ENCODE measurements at regions of chrX and their contacts with region 1.

Region 1: GRCh38 chrX:153075366-153075765 is 3.1 kb downstream of the PNMA6A start:
- DNase-seq: peak in 1 of 2 donors; percentile 81
- H3K4me3 ChIP-seq: no peak overlapping the region
- CTCF ChIP-seq: no peak
- POLR2A ChIP-seq: no peak

Region 2: DNA sequence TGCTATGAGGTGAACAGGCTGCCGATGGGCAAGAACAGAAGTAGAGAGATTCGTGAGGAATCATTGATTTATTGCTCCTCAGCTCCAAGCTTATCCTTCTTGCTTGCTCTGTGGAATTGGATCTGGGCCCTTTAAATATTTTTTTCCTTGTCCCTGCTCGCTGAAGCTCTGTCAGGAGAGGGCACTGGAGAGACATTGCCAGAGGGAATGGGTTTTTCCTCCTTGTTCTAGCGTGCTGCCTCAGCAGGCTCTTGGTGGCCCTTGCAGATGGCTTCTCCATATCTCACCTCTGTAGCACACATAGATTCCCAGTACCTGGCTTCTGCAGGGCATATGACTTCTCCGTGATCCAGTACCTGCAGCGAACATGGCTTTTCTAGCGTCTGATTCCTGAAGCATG is 1273.4 kb before region 1 on chrX:
- intact Hi-C with region 1: loop called (anchors 10 kb)
- DNase-seq: no peak
- H3K4me3 ChIP-seq: no peak overlapping the region
- CTCF ChIP-seq: no peak
- POLR2A ChIP-seq: no peak

Region 3: GRCh38 chrX:153153516-153153915 is 78.2 kb after region 1 on chrX:
- intact Hi-C with region 1: no loop called
- DNase-seq: no peak
- H3K4me3 ChIP-seq: no peak overlapping the region
- CTCF ChIP-seq: no peak
- POLR2A ChIP-seq: no peak

Region 4: DNA sequence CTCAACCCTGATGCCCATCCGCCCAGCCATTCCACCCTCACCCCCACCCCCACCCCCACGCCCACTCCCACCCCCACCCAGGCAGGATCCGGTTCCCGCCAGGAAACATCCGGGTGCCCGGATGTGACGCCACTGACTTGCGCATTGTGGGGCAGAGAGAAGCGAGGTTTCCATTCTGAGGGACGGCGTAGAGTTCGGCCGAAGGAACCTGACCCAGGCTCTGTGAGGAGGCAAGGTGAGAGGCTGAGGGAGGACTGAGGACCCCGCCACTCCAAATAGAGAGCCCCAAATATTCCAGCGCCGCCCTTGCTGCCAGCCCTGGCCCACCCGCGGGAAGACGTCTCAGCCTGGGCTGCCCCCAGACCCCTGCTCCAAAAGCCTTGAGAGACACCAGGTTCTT is 103.8 kb after region 1 on chrX and contains the start of gene MAGEA1:
- intact Hi-C with region 1: no loop called
- DNase-seq: no peak
- H3K4me3 ChIP-seq: no peak within 1 kb of the TSS
- CTCF ChIP-seq: no peak
- POLR2A ChIP-seq: no peak
- total RNA-seq, gene MAGEA1: not detected

Region 5: GRCh38 chrX:153598541-153599191 is 523.3 kb after region 1 on chrX and contains the start of gene CCNQ:
- intact Hi-C with region 1: no loop called
- DNase-seq: no peak
- H3K4me3 ChIP-seq: peak within 1 kb of the TSS; percentile 45
- CTCF ChIP-seq: no peak
- POLR2A ChIP-seq: no peak
- total RNA-seq, gene CCNQ: 20.7 to 35.7 (median 28.5) TPM

Region 6: GRCh38 chrX:154046031-154046781 is 970.8 kb after region 1 on chrX:
- intact Hi-C with region 1: no loop called
- DNase-seq: peak in 1 of 2 donors; percentile 34
- H3K4me3 ChIP-seq: no peak overlapping the region
- CTCF ChIP-seq: no peak
- POLR2A ChIP-seq: no peak

Measured in lower leg skin (tissue), 4 donors.